Activated naive CD4-positive, alpha-beta T cell treated with anti-CD3 and anti-CD28 coated beads for 36 hours (primary cell): ENCODE measurements at regions of chr21 and their contacts with region 1.

Region 1: DNA sequence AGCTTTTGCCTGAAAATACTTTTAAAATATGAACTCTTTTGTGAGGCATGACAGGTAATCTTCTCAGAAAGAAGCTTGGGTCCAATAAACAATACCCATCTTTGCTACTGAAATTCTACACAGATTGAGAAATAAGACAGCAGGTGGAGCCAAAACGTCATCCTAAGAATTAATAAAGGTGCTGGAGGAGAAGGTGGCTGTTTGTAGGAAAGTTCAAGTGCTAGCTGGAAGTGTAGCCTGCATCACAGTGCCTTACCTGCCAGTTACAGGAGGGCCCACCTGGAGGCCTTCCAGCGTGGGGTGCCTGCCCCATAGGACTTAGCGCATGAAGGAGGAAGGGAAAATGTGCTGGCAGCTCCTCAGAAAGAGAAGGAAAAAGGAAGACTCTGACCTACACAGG is 93.7 kb downstream of the TTC3 start:
- DNase-seq: peak; percentile 9
- H3K4me3 Mint-ChIP-seq: no peak overlapping the region
- H3K27ac Mint-ChIP-seq: no peak overlapping the region
- H3K4me1 Mint-ChIP-seq: no peaks in the 10 kb centered on the region
- H3K27me3 Mint-ChIP-seq: no peaks in the 10 kb centered on the region

Region 2: GRCh38 chr21:37273911-37274690 is 107.4 kb after region 1 on chr21:
- CTCF ChIA-PET with region 1: no interaction called
- intact Hi-C with region 1: no loop called
- DNase-seq: no peak
- H3K4me3 Mint-ChIP-seq: no peak overlapping the region
- H3K27ac Mint-ChIP-seq: no peak overlapping the region
- H3K4me1 Mint-ChIP-seq: peaks cover 4% of the 10 kb centered on the region
- H3K27me3 Mint-ChIP-seq: no peaks in the 10 kb centered on the region

Region 3: GRCh38 chr21:37582590-37582989 is 415.9 kb after region 1 on chr21:
- CTCF ChIA-PET with region 1: no interaction called
- intact Hi-C with region 1: loop called (anchors 5 kb)
- DNase-seq: peak; percentile 35
- H3K4me3 Mint-ChIP-seq: no peak overlapping the region
- H3K27ac Mint-ChIP-seq: peak overlapping the region; percentile 19
- H3K4me1 Mint-ChIP-seq: peaks cover 6% of the 10 kb centered on the region
- H3K27me3 Mint-ChIP-seq: peaks cover 5% of the 10 kb centered on the region

Region 4: GRCh38 chr21:37653201-37653600 is 486.5 kb after region 1 on chr21:
- CTCF ChIA-PET with region 1: no interaction called
- intact Hi-C with region 1: no loop called
- DNase-seq: no peak
- H3K4me3 Mint-ChIP-seq: no peak overlapping the region
- H3K27ac Mint-ChIP-seq: no peak overlapping the region
- H3K4me1 Mint-ChIP-seq: no peaks in the 10 kb centered on the region
- H3K27me3 Mint-ChIP-seq: peaks cover 5% of the 10 kb centered on the region